ENCODE measurements at regions of chr3 and their contacts with region 1.

Region 1: GRCh38 chr3:63993653-63994079 is 29.6 kb downstream of the PSMD6 start:
- DNase-seq: peak; percentile 67
- H3K4me3 ChIP-seq: no peak overlapping the region
- H3K27ac ChIP-seq: no peak overlapping the region
- H3K4me1 ChIP-seq: no peaks in the 10 kb centered on the region
- H3K27me3 ChIP-seq: no peaks in the 10 kb centered on the region
- CTCF ChIP-seq: peak; percentile 62 to 93 (median 90)
- POLR2A ChIP-seq: no peak

Region 2: GRCh38 chr3:63872135-63872903 is 121.3 kb before region 1 on chr3:
- intact Hi-C with region 1: loop called (anchors 10 kb)
- DNase-seq: no peak
- H3K4me3 ChIP-seq: no peak overlapping the region
- H3K27ac ChIP-seq: no peak overlapping the region
- H3K4me1 ChIP-seq: no peaks in the 10 kb centered on the region
- H3K27me3 ChIP-seq: no peaks in the 10 kb centered on the region
- CTCF ChIP-seq: no peak
- POLR2A ChIP-seq: no peak

Region 3: DNA sequence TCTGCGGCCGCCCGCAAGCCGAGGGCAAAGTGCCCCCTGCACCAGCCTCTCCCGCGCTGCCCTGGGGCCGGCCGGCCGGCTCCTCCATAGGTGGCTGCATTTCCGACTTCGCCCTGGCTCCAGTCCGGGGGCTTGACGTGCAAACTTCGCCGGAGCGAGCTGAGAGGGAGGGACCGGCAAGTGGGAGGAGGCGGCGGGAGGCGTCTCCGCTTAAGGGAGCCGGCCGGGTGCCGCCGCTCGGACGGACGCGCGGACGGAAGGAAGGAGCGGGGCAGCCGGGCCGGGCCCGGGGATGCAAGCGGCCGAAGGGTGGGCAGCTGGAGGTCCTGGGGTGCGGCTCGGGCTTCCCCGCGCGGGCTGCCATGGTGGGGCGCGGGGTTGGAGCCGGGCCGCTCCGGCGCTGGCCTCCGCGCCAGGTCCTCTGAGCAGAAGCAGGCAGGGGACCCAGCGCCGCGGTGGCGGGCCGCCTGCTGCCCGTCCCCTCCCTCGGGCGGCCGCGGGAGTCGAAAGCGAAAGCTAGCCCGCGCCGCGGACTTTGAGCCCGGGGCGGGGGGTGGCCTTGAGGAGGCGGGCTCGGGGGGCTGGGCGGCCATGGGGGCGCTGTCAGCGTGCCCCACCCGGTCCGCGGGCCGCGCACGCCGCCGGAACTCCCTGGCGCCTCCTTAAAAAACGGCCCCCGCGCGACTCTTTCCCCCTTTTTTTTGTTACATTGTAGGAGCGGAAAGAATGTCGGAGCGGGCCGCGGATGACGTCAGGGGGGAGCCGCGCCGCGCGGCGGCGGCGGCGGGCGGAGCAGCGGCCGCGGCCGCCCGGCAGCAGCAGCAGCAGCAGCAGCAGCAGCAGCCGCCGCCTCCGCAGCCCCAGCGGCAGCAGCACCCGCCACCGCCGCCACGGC is 81.5 kb before region 1 on chr3 and contains the start of gene SCAANT1:
- intact Hi-C with region 1: loop called (anchors 5 kb)
- DNase-seq: peak; percentile 87
- H3K4me3 ChIP-seq: peak within 1 kb of the TSS; percentile 79 to 93
- H3K27ac ChIP-seq: peak within 1 kb of the TSS; percentile 93 to 98
- H3K4me1 ChIP-seq: peaks cover 3% of the 10 kb centered on the region
- H3K27me3 ChIP-seq: no peaks in the 10 kb centered on the region
- CTCF ChIP-seq: peak in 2 of 4 experiments; percentile 13 to 24
- POLR2A ChIP-seq: peak; percentile 55
- total RNA-seq, gene SCAANT1: not detected

Region 4: GRCh38 chr3:64327100-64327804 is 333.6 kb after region 1 on chr3:
- intact Hi-C with region 1: no loop called
- DNase-seq: no peak
- H3K4me3 ChIP-seq: no peak overlapping the region
- H3K27ac ChIP-seq: peak overlapping the region; percentile 61 to 70
- H3K4me1 ChIP-seq: no peaks in the 10 kb centered on the region
- H3K27me3 ChIP-seq: no peaks in the 10 kb centered on the region
- CTCF ChIP-seq: no peak
- POLR2A ChIP-seq: no peak